PC-9 (cell line): ENCODE measurements at regions of chr12 and their contacts with region 1.

Region 1: DNA sequence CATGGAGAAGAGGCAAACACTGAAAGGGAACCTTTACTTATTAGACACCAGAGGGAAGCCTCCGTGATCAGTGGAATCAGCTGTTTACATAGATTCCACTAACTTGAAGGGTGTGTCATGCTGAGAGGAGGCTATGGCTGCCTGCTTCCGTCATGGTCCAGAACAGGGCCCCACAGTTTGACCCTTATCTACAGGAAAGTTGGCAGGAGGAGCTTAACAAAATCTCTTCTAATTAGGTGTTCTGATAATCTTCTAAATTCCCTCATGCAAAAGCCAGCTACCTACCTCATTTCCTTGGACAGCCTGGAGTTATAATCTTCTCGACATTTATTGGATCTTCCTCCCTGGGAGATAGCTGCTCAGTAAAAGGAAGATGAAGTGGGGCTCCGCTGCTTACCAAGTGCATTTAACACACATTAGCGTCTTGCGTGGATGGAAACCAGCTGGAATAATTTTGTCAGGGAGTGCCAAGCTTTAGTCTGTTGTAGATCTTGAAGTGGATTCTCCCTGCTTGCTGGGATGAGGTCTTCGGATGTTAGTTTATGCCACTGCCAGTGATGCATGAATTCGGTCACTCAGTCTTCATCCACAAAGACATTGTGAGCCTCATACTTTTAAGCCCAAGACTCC is 171.0 kb downstream of the PAH start:
- DNase-seq: no peak
- H3K4me3 ChIP-seq: no peak overlapping the region
- H3K27ac ChIP-seq: no peak overlapping the region
- H3K4me1 ChIP-seq: no peaks in the 10 kb centered on the region
- H3K27me3 ChIP-seq: no peaks in the 10 kb centered on the region
- CTCF ChIP-seq: no peak

Region 2: GRCh38 chr12:102474438-102475064 is 271.5 kb before region 1 on chr12:
- CTCF ChIA-PET with region 1: no interaction called
- POLR2A ChIA-PET with region 1: no interaction called
- intact Hi-C with region 1: no loop called
- DNase-seq: no peak
- H3K4me3 ChIP-seq: no peak overlapping the region
- H3K27ac ChIP-seq: no peak overlapping the region
- H3K4me1 ChIP-seq: peaks cover 5% of the 10 kb centered on the region; the same call in 1 of the 2 replicates
- H3K27me3 ChIP-seq: no peaks in the 10 kb centered on the region
- CTCF ChIP-seq: no peak

Region 3: GRCh38 chr12:102759466-102759865 is 13.4 kb after region 1 on chr12:
- CTCF ChIA-PET with region 1: interaction called, 19 read pairs
- POLR2A ChIA-PET with region 1: no interaction called
- intact Hi-C with region 1: no loop called
- DNase-seq: no peak
- H3K4me3 ChIP-seq: no peak overlapping the region
- H3K27ac ChIP-seq: no peak overlapping the region
- H3K4me1 ChIP-seq: no peaks in the 10 kb centered on the region
- H3K27me3 ChIP-seq: peaks cover 3% of the 10 kb centered on the region; the same call in 1 of the 2 replicates
- CTCF ChIP-seq: no peak

Region 4: GRCh38 chr12:103241184-103241583 is 495.1 kb after region 1 on chr12:
- CTCF ChIA-PET with region 1: no interaction called
- POLR2A ChIA-PET with region 1: no interaction called
- intact Hi-C with region 1: no loop called
- DNase-seq: no peak
- H3K4me3 ChIP-seq: no peak overlapping the region
- H3K27ac ChIP-seq: no peak overlapping the region
- H3K4me1 ChIP-seq: no peaks in the 10 kb centered on the region
- H3K27me3 ChIP-seq: no peaks in the 10 kb centered on the region
- CTCF ChIP-seq: no peak